ENCODE measurements at regions of chr12 and their contacts with region 1.

Region 1: DNA sequence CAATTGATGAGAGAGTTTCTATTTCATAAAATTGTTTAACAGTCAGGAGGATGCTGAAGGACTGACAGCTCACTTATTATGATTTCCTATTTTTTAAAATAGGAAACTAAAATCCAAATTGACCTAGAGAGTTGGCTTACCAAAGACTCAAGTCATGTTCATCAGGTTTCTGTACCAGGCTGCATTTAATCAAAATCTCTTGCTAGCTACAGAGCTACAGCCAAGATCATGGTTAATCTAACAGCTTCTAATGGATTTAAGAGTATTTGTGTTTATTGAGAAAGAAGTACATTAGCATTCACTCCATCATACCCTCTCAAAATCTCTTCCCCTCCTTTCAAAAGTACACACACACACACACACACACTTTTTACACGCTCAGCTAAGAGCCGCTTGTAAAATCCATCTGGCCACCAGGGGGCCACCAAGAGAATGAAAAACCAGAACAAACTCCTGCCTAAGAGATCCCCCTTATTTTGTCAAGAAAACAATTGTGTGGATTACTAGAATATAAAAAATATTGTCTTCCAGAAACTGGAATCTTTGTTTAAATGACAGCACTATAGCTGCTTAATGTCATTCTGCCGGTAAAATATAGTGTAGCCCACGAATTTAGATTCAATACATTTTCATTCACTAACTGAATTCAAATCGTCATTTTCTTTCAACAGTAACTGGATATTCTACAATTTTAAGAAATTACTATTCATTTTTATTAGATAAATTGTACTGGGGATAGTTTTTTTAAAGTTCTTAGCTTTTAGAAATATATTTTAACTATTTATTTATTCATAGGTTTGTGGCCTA is 334.0 kb downstream of the BTG1 start:
- DNase-seq: peak; percentile 79
- H3K4me3 ChIP-seq: no peak overlapping the region
- H3K27ac ChIP-seq: no peak overlapping the region
- H3K4me1 ChIP-seq: no peaks in the 10 kb centered on the region
- H3K27me3 ChIP-seq: no peaks in the 10 kb centered on the region
- CTCF ChIP-seq: peak; percentile 81 to 93 (median 85)
- EP300 ChIP-seq: no peak
- POLR2A ChIP-seq: no peak

Region 2: GRCh38 chr12:91382081-91382543 is 429.6 kb before region 1 on chr12:
- in situ Hi-C with region 1: loop called in 3 of 4 experiments (anchors 25 kb)
- intact Hi-C with region 1: no loop called
- DNase-seq: peak; percentile 86
- H3K4me3 ChIP-seq: peak overlapping the region; percentile 7 to 40 (median 22)
- H3K27ac ChIP-seq: peak overlapping the region; percentile 53 to 71 (median 60)
- H3K4me1 ChIP-seq: peaks cover 0 to 27% (median 1%) of the 10 kb centered on the region in 4 donors
- H3K27me3 ChIP-seq: no peaks in the 10 kb centered on the region
- CTCF ChIP-seq: peak; percentile 83 to 94 (median 87)
- EP300 ChIP-seq: no peak
- POLR2A ChIP-seq: no peak

Region 3: GRCh38 chr12:91896286-91897024 is 84.8 kb after region 1 on chr12:
- in situ Hi-C with region 1: no loop called
- intact Hi-C with region 1: loop called (anchors 5 kb)
- DNase-seq: no peak
- H3K4me3 ChIP-seq: no peak overlapping the region
- H3K27ac ChIP-seq: no peak overlapping the region
- H3K4me1 ChIP-seq: peaks cover 0 to 5% (median 1%) of the 10 kb centered on the region in 4 donors
- H3K27me3 ChIP-seq: no peaks in the 10 kb centered on the region
- CTCF ChIP-seq: no peak
- EP300 ChIP-seq: no peak
- POLR2A ChIP-seq: no peak

Region 4: DNA sequence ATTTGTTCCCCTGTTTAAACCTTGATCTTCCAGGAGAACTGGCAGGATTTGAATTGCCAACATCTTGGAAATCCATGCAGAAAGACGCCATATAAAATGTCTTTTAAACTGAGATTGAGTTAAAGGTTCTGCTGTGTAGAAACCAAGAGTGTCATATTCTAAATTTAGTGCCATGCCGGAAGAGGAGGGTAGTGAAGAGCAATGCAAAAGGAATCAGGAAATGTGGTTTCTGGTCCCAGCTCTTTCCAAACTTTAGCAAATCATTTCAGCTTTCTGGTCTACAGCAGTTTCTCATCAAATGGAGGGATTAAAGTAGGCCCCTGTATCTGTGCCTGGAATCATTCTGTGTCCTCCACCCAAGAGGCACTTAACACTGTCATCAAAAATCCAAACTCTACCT is 248.3 kb after region 1 on chr12:
- in situ Hi-C with region 1: no loop called
- intact Hi-C with region 1: loop called (anchors 5 kb)
- DNase-seq: no peak
- H3K4me3 ChIP-seq: no peak overlapping the region
- H3K27ac ChIP-seq: no peak overlapping the region
- H3K4me1 ChIP-seq: peaks cover 14 to 40% (median 18%) of the 10 kb centered on the region in 4 donors
- H3K27me3 ChIP-seq: no peaks in the 10 kb centered on the region
- CTCF ChIP-seq: no peak
- EP300 ChIP-seq: no peak
- POLR2A ChIP-seq: no peak

Region 5: DNA sequence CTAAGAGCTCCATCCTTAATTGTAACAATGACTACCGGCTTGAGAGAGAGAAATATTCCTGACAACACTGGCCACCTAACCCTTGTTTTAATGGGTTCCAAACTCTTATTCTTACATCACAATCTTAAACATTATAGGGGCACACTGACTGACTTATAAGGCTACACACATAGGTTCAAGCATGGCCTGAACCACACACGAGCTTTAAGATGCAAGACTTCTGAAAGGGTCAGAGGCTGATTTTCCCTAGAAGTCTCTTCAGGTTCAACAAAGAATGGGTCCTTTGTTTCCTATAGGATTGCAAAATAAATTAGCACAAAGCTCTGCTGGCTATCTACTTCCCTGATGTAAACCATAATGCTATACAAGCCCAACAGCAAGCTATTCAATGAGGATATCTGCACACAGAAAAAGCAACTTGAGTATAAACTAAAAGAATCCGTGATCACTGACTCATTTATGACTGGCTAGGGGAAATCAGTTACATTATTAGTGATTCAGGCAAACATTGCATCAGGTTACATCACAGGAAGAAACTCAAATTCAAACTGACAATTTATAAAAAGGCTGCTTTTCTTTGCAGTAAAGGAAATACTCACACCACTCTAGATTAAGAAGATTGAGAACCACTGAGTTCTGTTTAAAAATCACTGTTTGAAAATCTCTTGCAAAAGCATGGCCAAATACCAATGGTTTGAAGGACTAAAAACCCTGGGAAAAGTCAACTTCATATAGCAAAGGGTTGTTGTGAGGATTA is 325.5 kb after region 1 on chr12:
- in situ Hi-C with region 1: loop called in 2 of 4 experiments (anchors 10 to 25 kb)
- intact Hi-C with region 1: loop called (anchors 2 kb)
- DNase-seq: no peak
- H3K4me3 ChIP-seq: peak overlapping the region in 3 of 4 donors; percentile 2 to 98 (median 74)
- H3K27ac ChIP-seq: peak overlapping the region; percentile 98 to 100 (median 99)
- H3K4me1 ChIP-seq: peaks cover 33 to 84% (median 62%) of the 10 kb centered on the region in 4 donors
- H3K27me3 ChIP-seq: no peaks in the 10 kb centered on the region
- CTCF ChIP-seq: no peak
- EP300 ChIP-seq: no peak
- POLR2A ChIP-seq: no peak

Region 6: DNA sequence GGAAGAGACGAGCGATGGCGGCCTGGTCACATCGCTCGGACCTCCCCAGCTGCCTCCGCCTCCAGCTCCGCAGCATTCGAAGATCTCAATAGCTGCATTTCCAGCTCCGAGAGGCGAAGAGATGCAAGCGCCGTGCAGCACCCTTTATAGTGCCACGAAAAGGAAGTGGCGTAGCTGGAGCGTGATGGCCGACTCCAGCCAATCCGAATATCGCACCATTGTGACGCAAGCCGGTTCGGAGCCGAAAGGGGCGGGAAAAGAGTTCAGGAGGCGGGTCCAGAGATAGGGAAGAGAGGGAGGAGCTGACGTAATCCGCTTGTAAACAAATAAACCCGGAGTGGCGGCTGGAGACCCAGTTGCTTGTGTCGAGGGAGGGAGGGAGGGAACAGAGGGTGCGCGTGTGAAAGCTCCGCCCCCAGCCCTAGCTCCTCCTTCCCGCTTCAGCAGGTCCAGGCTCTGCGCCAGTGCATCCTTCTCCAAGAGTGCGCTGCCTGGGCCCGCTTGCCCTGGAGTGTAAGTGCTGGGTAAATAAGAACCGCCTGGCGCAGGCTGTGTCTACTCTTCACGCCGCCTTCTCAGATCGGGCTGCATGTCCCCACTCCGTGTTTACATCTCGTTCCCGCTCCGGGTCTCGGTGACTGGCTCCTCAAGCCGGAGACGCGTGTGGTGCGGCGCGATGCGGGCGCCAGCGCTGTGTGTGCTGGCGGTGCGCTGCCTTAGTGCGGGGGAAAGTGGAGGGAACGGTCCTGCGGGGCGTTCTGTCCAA is 334.2 kb after region 1 on chr12 and contains the start of gene BTG1:
- in situ Hi-C with region 1: loop called in 1 of 4 experiments (anchors 25 kb)
- intact Hi-C with region 1: loop called (anchors 2 kb)
- DNase-seq: peak; percentile 100
- H3K4me3 ChIP-seq: peak within 1 kb of the TSS; percentile 74 to 98 (median 96)
- H3K27ac ChIP-seq: peak within 1 kb of the TSS; percentile 98 to 100 (median 99)
- H3K4me1 ChIP-seq: peaks cover 0 to 30% (median 2%) of the 10 kb centered on the region in 4 donors
- H3K27me3 ChIP-seq: no peaks in the 10 kb centered on the region
- CTCF ChIP-seq: no peak
- EP300 ChIP-seq: no peak
- POLR2A ChIP-seq: peak; percentile 99
- total RNA-seq, gene BTG1: 28.3 to 111 (median 78.1) TPM

Region 7: DNA sequence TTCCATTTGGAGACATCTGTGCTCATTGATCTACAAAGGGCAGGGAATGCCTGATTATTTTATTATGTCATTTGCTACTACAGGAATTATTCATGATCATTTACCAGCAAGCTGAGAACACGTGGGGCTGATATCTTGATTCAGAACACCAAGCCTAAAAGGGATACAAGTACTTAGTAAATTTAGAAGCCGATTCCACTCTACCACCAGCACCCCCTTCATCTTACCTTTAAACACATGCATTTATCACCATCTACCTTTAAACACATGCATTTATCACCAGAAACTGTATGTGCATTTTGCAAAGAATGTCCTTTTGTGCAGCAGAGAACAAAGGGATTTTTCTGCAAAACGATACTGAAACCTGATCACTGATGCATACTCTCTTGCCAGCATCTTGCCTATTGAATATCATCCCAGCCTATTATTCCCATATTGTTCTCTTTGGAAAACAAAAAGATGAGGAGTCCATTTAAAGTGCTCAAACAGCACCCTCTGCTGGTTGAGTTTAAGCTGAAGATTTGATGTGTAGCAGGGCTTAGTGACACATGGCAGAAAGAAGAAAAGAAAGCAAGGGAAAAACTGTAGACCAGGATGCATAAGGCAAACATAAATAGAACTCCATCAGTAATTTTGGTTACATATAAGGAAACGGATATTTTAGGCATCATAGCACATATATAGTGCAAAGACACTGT is 758.5 kb after region 1 on chr12:
- in situ Hi-C with region 1: loop called in 2 of 4 experiments (anchors 5 to 25 kb)
- intact Hi-C with region 1: loop called (anchors 2 kb)
- DNase-seq: peak; percentile 64
- H3K4me3 ChIP-seq: no peak overlapping the region
- H3K27ac ChIP-seq: no peak overlapping the region
- H3K4me1 ChIP-seq: peaks cover 0 to 20% (median 5%) of the 10 kb centered on the region in 4 donors
- H3K27me3 ChIP-seq: no peaks in the 10 kb centered on the region
- CTCF ChIP-seq: peak; percentile 76 to 94 (median 81)
- EP300 ChIP-seq: no peak
- POLR2A ChIP-seq: no peak

Measured in transverse colon (tissue), 4 donors.